Transverse colon (tissue), 4 donors: ENCODE measurements at regions of chr11 and their contacts with region 1.

Region 1: DNA sequence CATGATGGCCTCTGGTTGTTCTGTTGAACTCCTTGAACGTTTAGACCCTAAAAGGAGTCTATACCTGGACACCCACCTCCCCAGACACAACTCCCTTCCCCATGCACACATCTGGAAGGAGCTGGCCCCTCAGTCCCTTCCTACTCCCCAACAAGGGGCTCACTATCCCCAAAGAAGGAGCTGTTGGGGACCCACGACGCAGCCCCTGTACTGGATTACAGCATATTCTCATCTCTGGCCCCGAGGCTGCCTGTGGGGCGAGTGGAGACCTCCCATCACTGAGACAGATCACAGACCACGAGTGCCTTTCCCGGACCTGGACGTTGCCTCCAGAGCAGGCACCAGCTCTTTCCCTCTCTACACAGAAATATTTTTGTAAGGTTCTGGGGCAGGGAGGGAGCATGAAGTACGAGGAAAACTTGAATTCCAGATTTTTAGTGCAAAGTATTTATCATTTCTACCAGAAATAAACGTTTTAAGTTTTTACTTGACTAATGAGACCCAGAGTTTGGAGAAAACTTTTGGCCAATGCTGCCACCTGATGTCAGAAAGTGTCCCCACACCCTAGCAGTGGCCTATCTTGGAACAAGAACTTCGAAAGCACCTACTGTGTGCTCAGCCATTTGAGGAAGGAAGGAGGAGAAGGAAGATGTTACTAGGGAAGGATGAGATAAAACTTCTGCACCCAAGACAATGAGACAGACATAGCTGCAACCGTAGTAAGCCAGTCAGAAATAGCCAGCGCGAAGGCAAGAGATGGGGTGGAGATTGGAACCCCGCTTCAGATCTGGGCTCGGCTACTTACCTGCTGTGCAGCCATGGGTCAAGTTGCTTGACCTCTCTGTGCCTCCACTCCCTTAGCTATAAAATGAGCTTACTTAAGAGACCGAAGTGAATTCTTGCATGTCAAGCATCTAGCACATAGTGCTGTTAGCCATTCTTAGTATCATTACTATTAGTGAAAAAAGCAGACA is 10.2 kb upstream of the POU2F3 start:
- DNase-seq: no peak
- H3K4me3 ChIP-seq: no peak overlapping the region
- H3K27ac ChIP-seq: no peak overlapping the region
- H3K4me1 ChIP-seq: peaks cover 0 to 16% (median 3%) of the 10 kb centered on the region in 4 donors
- H3K27me3 ChIP-seq: no peaks in the 10 kb centered on the region
- CTCF ChIP-seq: peak; percentile 54 to 69 (median 64)
- EP300 ChIP-seq: no peak
- POLR2A ChIP-seq: no peak

Region 2: DNA sequence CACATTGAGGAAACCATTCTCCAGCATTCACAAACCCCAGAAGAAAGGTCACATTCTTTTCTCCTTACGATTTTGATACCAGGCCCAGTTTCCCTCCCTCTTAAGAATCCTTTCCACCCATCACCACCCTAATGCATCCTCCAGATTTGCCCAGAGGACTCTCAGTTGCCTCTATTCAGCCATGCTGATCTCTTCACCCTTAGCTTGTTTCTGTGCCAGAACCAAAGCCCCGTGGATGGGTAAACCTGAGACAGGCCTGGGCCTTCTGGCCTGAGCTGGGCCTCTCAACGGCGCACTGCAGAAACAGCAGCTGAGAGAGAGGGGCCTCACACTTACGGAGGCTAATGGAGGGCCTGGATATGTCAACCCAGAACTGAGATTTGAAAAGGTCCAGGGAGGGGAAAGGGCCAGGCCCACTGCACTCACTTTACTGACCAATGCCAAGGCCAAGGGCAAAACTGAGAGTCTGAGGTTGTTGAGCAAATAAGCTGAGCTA is 51.1 kb before region 1 on chr11:
- in situ Hi-C with region 1: loop called (anchors 5 to 10 kb)
- intact Hi-C with region 1: loop called (anchors 2 kb)
- DNase-seq: no peak
- H3K4me3 ChIP-seq: no peak overlapping the region
- H3K27ac ChIP-seq: no peak overlapping the region
- H3K4me1 ChIP-seq: peaks cover 6 to 21% (median 11%) of the 10 kb centered on the region in 4 donors
- H3K27me3 ChIP-seq: no peaks in the 10 kb centered on the region
- CTCF ChIP-seq: no peak
- EP300 ChIP-seq: no peak
- POLR2A ChIP-seq: no peak

Region 3: DNA sequence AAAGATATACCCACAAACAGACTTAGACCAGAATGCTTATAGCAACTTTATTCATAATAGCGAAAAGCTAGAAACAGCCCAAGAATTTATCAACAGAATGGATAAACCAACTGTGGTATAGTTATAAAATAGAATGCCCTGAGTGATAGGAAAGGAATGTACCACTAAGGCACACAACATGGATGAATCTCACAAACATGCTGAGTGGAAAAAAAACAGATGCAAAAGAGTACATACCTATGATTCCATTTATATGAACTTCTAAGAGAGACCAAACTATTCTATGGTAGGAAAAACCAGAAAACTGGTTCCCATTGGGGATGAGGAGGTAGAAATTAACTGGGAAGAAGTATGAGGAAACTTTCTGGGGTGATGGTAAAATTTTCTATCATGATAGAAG is 241.4 kb after region 1 on chr11:
- in situ Hi-C with region 1: no loop called
- intact Hi-C with region 1: loop called (anchors 5 kb)
- DNase-seq: no peak
- H3K4me3 ChIP-seq: no peak overlapping the region
- H3K27ac ChIP-seq: no peak overlapping the region
- H3K4me1 ChIP-seq: no peaks in the 10 kb centered on the region
- H3K27me3 ChIP-seq: no peaks in the 10 kb centered on the region
- CTCF ChIP-seq: no peak
- EP300 ChIP-seq: no peak
- POLR2A ChIP-seq: no peak